ENCODE measurements at regions of chr13 and their contacts with region 1.

Region 1: GRCh38 chr13:33542283-33543088 is 256.9 kb upstream of the STARD13 start:
- DNase-seq: peak; percentile 94
- ATAC-seq: peak; percentile 90
- H3K4me3 ChIP-seq: peak overlapping the region; percentile 69
- H3K27ac ChIP-seq: peak overlapping the region; percentile 97
- H3K4me1 ChIP-seq: peaks cover 12% of the 10 kb centered on the region
- H3K27me3 ChIP-seq: no peaks in the 10 kb centered on the region
- CTCF ChIP-seq: peak; percentile 86 to 99 (median 88)
- EP300 ChIP-seq: no peak; a peak in 1 of 4 replicates
- POLR2A ChIP-seq: peak; percentile 70
- RAD21 ChIP-seq: peak; percentile 90

Region 2: DNA sequence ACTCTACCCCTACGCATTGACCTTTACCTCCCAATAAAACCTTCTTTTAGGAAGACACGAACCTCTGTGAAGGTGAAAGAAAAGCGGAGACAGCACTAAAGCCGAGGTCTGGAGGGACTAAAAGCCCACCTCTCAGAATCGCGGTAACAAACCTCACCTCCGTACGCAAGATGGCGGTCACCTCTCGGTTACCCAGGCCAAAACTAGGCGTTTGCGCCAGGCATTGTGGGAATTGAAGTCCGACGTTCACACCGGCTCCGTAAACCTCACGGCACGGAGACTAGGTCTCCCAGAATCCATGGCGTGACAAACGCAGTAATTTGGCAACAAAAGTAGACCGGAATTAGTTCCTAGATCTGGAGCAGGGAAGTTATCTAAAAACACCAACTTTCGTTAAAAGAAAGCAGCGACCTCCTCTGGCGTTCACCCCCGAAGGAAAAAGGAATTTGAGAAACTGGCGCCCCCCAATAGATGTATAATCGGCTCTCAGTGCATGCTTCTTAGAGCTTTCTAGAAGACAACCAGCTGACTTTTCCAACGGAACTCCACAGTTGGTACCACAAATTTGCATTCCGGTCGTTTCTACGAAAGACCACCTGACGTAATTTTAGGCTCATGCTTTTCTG is 1003.8 kb before region 1 on chr13 and contains the start of gene N4BP2L2:
- CTCF ChIA-PET with region 1: no interaction called
- POLR2A ChIA-PET with region 1: no interaction called
- RAD21 ChIA-PET with region 1: no interaction called
- SMC1A ChIA-PET with region 1: interaction called, 3 read pairs
- in situ Hi-C with region 1: loop called (anchors 10 kb)
- intact Hi-C with region 1: loop called (anchors 2 kb)
- DNase-seq: peak; percentile 94
- ATAC-seq: peak; percentile 95
- H3K4me3 ChIP-seq: peak within 1 kb of the TSS; percentile 94
- H3K27ac ChIP-seq: peak within 1 kb of the TSS; percentile 100
- H3K4me1 ChIP-seq: peaks cover 5% of the 10 kb centered on the region; the same call in 1 of the 2 replicates
- H3K27me3 ChIP-seq: no peaks in the 10 kb centered on the region
- CTCF ChIP-seq: peak; percentile 12 to 47 (median 13); a peak in 3 of 6 replicates
- EP300 ChIP-seq: 0 out of 4 replicates have a peak, but pooled peaks of 1 of the 2 experiments have one; percentile 13
- POLR2A ChIP-seq: peak; percentile 85
- RAD21 ChIP-seq: peak; percentile 39; the same call in 1 of the 2 replicates
- polyA plus RNA-seq, gene N4BP2L2: 41.7 to 59.8 TPM

Region 3: GRCh38 chr13:32905063-32905863 is 637.2 kb before region 1 on chr13:
- CTCF ChIA-PET with region 1: no interaction called
- POLR2A ChIA-PET with region 1: interaction called, 4 read pairs
- RAD21 ChIA-PET with region 1: no interaction called
- SMC1A ChIA-PET with region 1: interaction called, 3 read pairs
- in situ Hi-C with region 1: no loop called
- intact Hi-C with region 1: loop called (anchors 5 kb)
- DNase-seq: peak; percentile 78
- ATAC-seq: peak; percentile 94
- H3K4me3 ChIP-seq: 0 out of 2 replicates have a peak overlapping the region, but pooled peaks have one; percentile 1
- H3K27ac ChIP-seq: peak overlapping the region; percentile 47; the same call in 1 of the 2 replicates
- H3K4me1 ChIP-seq: peaks cover 9% of the 10 kb centered on the region
- H3K27me3 ChIP-seq: no peaks in the 10 kb centered on the region
- CTCF ChIP-seq: no peak
- EP300 ChIP-seq: peak; percentile 55 to 88; a peak in 3 of 4 replicates
- POLR2A ChIP-seq: no peak
- RAD21 ChIP-seq: no peak

Region 4: GRCh38 chr13:33194820-33195692 is 347.4 kb before region 1 on chr13:
- CTCF ChIA-PET with region 1: interaction called, 3 read pairs
- POLR2A ChIA-PET with region 1: interaction called, 8 read pairs
- RAD21 ChIA-PET with region 1: interaction called, 11 read pairs
- SMC1A ChIA-PET with region 1: interaction called, 4 read pairs
- in situ Hi-C with region 1: no loop called
- intact Hi-C with region 1: loop called (anchors 2 kb)
- DNase-seq: peak; percentile 99
- ATAC-seq: peak; percentile 71
- H3K4me3 ChIP-seq: peak overlapping the region; percentile 54
- H3K27ac ChIP-seq: peak overlapping the region; percentile 92
- H3K4me1 ChIP-seq: peaks cover 29% of the 10 kb centered on the region
- H3K27me3 ChIP-seq: no peaks in the 10 kb centered on the region
- CTCF ChIP-seq: no peak
- EP300 ChIP-seq: peak; percentile 71 to 95
- POLR2A ChIP-seq: no peak
- RAD21 ChIP-seq: 0 out of 2 replicates have a peak, but pooled peaks have one; percentile 24

Region 5: GRCh38 chr13:33466262-33466661 is 76.2 kb before region 1 on chr13:
- CTCF ChIA-PET with region 1: no interaction called
- POLR2A ChIA-PET with region 1: no interaction called
- RAD21 ChIA-PET with region 1: no interaction called
- SMC1A ChIA-PET with region 1: no interaction called
- in situ Hi-C with region 1: no loop called
- intact Hi-C with region 1: no loop called
- DNase-seq: no peak
- ATAC-seq: no peak
- H3K4me3 ChIP-seq: no peak overlapping the region
- H3K27ac ChIP-seq: no peak overlapping the region
- H3K4me1 ChIP-seq: no peaks in the 10 kb centered on the region
- H3K27me3 ChIP-seq: no peaks in the 10 kb centered on the region
- CTCF ChIP-seq: no peak
- EP300 ChIP-seq: no peak
- POLR2A ChIP-seq: no peak
- RAD21 ChIP-seq: no peak

Region 6: GRCh38 chr13:33554919-33555791 is 12.7 kb after region 1 on chr13:
- CTCF ChIA-PET with region 1: interaction called, 12 read pairs
- POLR2A ChIA-PET with region 1: interaction called, 7 read pairs
- RAD21 ChIA-PET with region 1: interaction called, 3 read pairs
- SMC1A ChIA-PET with region 1: interaction called, 13 read pairs
- in situ Hi-C with region 1: no loop called
- intact Hi-C with region 1: no loop called
- DNase-seq: no peak
- ATAC-seq: peak; percentile 96
- H3K4me3 ChIP-seq: no peak overlapping the region
- H3K27ac ChIP-seq: peak overlapping the region; percentile 46
- H3K4me1 ChIP-seq: peaks cover 11% of the 10 kb centered on the region; the same call in 1 of the 2 replicates
- H3K27me3 ChIP-seq: no peaks in the 10 kb centered on the region
- CTCF ChIP-seq: no peak
- EP300 ChIP-seq: peak in 1 of 2 experiments; percentile 8; a peak in 1 of 4 replicates
- POLR2A ChIP-seq: no peak
- RAD21 ChIP-seq: no peak

Region 7: GRCh38 chr13:34076943-34077703 is 534.6 kb after region 1 on chr13:
- CTCF ChIA-PET with region 1: interaction called, 9 read pairs
- POLR2A ChIA-PET with region 1: no interaction called
- RAD21 ChIA-PET with region 1: interaction called, 5 read pairs
- SMC1A ChIA-PET with region 1: interaction called, 3 read pairs
- in situ Hi-C with region 1: no loop called
- intact Hi-C with region 1: loop called (anchors 5 kb)
- DNase-seq: no peak
- ATAC-seq: peak; percentile 62
- H3K4me3 ChIP-seq: no peak overlapping the region
- H3K27ac ChIP-seq: no peak overlapping the region
- H3K4me1 ChIP-seq: no peaks in the 10 kb centered on the region
- H3K27me3 ChIP-seq: no peaks in the 10 kb centered on the region
- CTCF ChIP-seq: peak; percentile 42 to 56 (median 51); a peak in 5 of 6 replicates
- EP300 ChIP-seq: no peak
- POLR2A ChIP-seq: no peak
- RAD21 ChIP-seq: peak; percentile 89